ENCODE measurements at regions of chr4 and their contacts with region 1.

Region 1: DNA sequence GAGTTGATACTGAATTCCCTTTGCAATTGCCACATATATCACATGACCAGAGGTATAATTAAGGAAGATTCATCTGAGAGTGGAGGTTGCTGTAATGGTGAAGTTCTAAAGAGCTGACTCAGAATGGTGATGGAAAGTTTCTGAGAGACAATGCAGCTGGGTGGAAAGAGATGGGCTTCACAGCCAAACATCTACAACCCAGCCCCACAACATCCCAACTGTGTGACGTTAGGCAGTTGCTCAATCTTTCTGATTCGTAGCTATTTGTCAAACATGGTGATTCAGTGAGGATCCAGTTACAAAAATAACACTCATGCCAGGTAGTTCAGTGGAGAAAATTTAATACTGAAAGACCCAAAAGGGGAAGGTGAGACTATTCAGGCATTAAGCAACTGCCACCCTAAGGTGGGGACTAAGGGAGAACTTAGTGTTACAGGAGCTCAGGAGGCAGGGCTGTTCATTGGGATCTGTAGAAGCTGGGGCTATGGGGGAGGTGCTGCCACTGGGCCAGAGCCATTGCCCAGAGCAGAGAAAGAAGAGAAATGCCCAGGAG is 6.9 kb upstream of the AFF1 start:
- DNase-seq: peak; percentile 92
- H3K4me3 ChIP-seq: no peak overlapping the region
- CTCF ChIP-seq: no peak

Region 2: GRCh38 chr4:86831262-86832130 is 96.4 kb before region 1 on chr4:
- CTCF ChIA-PET with region 1: no interaction called
- POLR2A ChIA-PET with region 1: no interaction called
- DNase-seq: peak; percentile 80
- H3K4me3 ChIP-seq: no peak overlapping the region
- CTCF ChIP-seq: no peak

Region 3: GRCh38 chr4:86950831-86951525 is 23.1 kb after region 1 on chr4:
- CTCF ChIA-PET with region 1: no interaction called
- POLR2A ChIA-PET with region 1: no interaction called
- DNase-seq: no peak
- H3K4me3 ChIP-seq: no peak overlapping the region
- CTCF ChIP-seq: no peak

Region 4: GRCh38 chr4:87006676-87007527 is 79.0 kb after region 1 on chr4:
- CTCF ChIA-PET with region 1: interaction called, 9 read pairs
- POLR2A ChIA-PET with region 1: interaction called, 17 read pairs
- DNase-seq: peak; percentile 58
- H3K4me3 ChIP-seq: peak overlapping the region; percentile 79
- CTCF ChIP-seq: no peak